Endothelial cell of umbilical vein (primary cell): ENCODE measurements at regions of chr17 and their contacts with region 1.

Region 1: DNA sequence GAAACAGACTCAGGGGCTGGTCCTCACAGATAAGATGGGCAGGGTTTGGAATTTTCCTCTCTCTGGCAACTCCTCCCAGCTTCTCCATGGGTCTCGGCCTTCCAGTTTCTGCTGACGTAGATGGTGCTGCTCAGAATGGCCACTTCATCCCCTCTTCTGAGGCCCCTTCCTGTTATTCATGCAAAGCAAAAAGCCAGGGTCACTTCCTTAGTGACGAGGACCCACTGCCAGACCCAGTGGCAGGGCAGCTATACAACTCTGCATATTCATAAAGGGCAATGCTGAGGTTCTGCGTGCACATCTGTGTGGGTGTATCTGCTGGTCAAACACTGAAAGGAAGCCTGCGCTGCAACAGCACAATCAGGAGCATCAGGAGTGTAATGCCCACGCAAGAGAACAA is 108.8 kb downstream of the WSCD1 start:
- DNase-seq: peak; percentile 98
- H3K4me3 ChIP-seq: no peak overlapping the region
- H3K27ac ChIP-seq: peak overlapping the region; percentile 75
- H3K4me1 ChIP-seq: peaks cover 19% of the 10 kb centered on the region
- H3K27me3 ChIP-seq: no peaks in the 10 kb centered on the region
- CTCF ChIP-seq: no peak
- POLR2A ChIP-seq: no peak

Region 2: GRCh38 chr17:6079155-6079888 is 99.7 kb before region 1 on chr17:
- CTCF ChIA-PET with region 1: no interaction called
- POLR2A ChIA-PET with region 1: no interaction called
- dilution Hi-C with region 1: no loop called
- intact Hi-C with region 1: no loop called
- DNase-seq: no peak
- H3K4me3 ChIP-seq: no peak overlapping the region
- H3K27ac ChIP-seq: no peak overlapping the region
- H3K4me1 ChIP-seq: no peaks in the 10 kb centered on the region
- H3K27me3 ChIP-seq: no peaks in the 10 kb centered on the region
- CTCF ChIP-seq: no peak
- POLR2A ChIP-seq: no peak

Region 3: DNA sequence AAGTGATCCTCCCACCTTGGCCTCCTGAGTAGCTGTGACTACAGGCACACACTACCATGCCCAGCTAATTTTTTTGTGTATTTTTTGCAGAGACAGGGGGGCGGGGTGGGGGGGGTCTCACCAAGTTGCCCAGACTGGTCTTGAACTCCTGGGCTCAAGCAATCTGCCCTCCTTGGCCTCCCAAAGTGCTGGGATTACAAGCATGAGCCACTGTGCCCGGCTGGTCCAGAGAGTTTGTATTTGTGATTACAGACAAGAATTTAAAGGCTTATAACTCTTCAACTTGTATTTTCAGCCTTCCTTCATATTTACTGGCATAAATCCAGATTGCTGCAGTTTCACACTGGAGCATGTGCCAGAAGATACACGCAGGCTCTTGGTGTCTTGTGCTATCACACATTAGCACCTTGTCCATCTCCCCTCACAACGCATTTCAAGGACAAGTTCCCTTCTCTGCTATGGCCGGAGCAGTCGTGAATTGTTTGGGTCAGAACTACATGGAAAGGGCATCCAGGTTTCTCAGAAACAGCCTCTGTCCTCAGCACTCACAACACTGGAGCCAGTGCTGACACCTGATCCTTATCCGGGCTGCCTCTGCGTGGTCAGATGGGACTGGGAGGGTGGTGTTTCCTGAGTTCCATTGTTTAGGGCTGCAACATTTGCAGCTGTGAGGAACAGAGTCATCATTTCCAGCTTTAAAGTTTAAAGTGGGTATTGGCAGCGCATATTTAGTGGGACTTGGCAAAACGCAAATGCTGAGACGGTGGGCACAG is 80.8 kb before region 1 on chr17:
- CTCF ChIA-PET with region 1: no interaction called
- POLR2A ChIA-PET with region 1: no interaction called
- dilution Hi-C with region 1: no loop called
- intact Hi-C with region 1: loop called (anchors 1 kb)
- DNase-seq: peak; percentile 98
- H3K4me3 ChIP-seq: no peak overlapping the region
- H3K27ac ChIP-seq: peak overlapping the region; percentile 91
- H3K4me1 ChIP-seq: peaks cover 40% of the 10 kb centered on the region
- H3K27me3 ChIP-seq: no peaks in the 10 kb centered on the region
- CTCF ChIP-seq: no peak
- POLR2A ChIP-seq: no peak

Region 4: GRCh38 chr17:6204203-6204722 is 25.2 kb after region 1 on chr17:
- CTCF ChIA-PET with region 1: no interaction called
- POLR2A ChIA-PET with region 1: no interaction called
- dilution Hi-C with region 1: no loop called
- intact Hi-C with region 1: loop called (anchors 2 kb)
- DNase-seq: no peak
- H3K4me3 ChIP-seq: no peak overlapping the region
- H3K27ac ChIP-seq: no peak overlapping the region
- H3K4me1 ChIP-seq: no peaks in the 10 kb centered on the region
- H3K27me3 ChIP-seq: peaks cover 8 to 9% of the 10 kb centered on the region in 2 experiments
- CTCF ChIP-seq: no peak
- POLR2A ChIP-seq: no peak

Region 5: GRCh38 chr17:6257336-6257735 is 78.3 kb after region 1 on chr17:
- CTCF ChIA-PET with region 1: no interaction called
- POLR2A ChIA-PET with region 1: no interaction called
- dilution Hi-C with region 1: no loop called
- intact Hi-C with region 1: loop called (anchors 1 kb)
- DNase-seq: peak; percentile 88
- H3K4me3 ChIP-seq: no peak overlapping the region
- H3K27ac ChIP-seq: peak overlapping the region; percentile 100
- H3K4me1 ChIP-seq: peaks cover 33% of the 10 kb centered on the region
- H3K27me3 ChIP-seq: no peaks in the 10 kb centered on the region
- CTCF ChIP-seq: no peak
- POLR2A ChIP-seq: no peak

Region 6: GRCh38 chr17:6366221-6366666 is 187.2 kb after region 1 on chr17:
- CTCF ChIA-PET with region 1: no interaction called
- POLR2A ChIA-PET with region 1: no interaction called
- dilution Hi-C with region 1: no loop called
- intact Hi-C with region 1: no loop called
- DNase-seq: no peak
- H3K4me3 ChIP-seq: no peak overlapping the region
- H3K27ac ChIP-seq: no peak overlapping the region
- H3K4me1 ChIP-seq: no peaks in the 10 kb centered on the region
- H3K27me3 ChIP-seq: peaks cover 3 to 10% of the 10 kb centered on the region in 2 experiments
- CTCF ChIP-seq: no peak
- POLR2A ChIP-seq: no peak

Region 7: GRCh38 chr17:6386041-6386630 is 207.1 kb after region 1 on chr17:
- CTCF ChIA-PET with region 1: no interaction called
- POLR2A ChIA-PET with region 1: no interaction called
- dilution Hi-C with region 1: no loop called
- intact Hi-C with region 1: no loop called
- DNase-seq: no peak
- H3K4me3 ChIP-seq: no peak overlapping the region
- H3K27ac ChIP-seq: no peak overlapping the region
- H3K4me1 ChIP-seq: no peaks in the 10 kb centered on the region
- H3K27me3 ChIP-seq: no peaks in the 10 kb centered on the region
- CTCF ChIP-seq: no peak
- POLR2A ChIP-seq: no peak

Region 8: DNA sequence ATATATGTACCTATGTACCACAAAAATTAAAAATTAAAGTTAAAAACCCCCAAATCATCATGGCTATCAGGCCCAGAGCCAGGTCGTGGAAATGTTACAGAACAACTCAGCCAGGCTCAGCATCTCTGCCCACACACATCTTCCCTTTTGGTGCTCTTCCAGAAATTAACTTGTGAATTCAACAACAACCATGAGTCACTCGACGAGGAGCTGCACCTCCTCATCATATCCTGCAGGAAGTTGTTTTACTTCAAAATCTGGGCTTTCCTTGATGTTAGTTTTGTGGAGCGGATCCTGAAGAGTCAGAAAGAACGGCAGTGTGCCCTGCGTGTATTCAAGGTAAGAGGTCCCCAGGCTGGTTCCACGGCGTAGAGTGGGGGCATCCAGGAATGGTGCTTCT is 607.6 kb after region 1 on chr17:
- CTCF ChIA-PET with region 1: no interaction called
- POLR2A ChIA-PET with region 1: no interaction called
- dilution Hi-C with region 1: no loop called
- intact Hi-C with region 1: no loop called
- DNase-seq: peak; percentile 93
- H3K4me3 ChIP-seq: peak overlapping the region in 2 of 3 experiments; percentile 30 to 42
- H3K27ac ChIP-seq: peak overlapping the region; percentile 33
- H3K4me1 ChIP-seq: peaks cover 6% of the 10 kb centered on the region
- H3K27me3 ChIP-seq: peaks cover 0 to 15% of the 10 kb centered on the region in 2 experiments
- CTCF ChIP-seq: no peak
- POLR2A ChIP-seq: no peak